A673 (cell line): ENCODE measurements at regions of chr3 and their contacts with region 1.

Region 1: DNA sequence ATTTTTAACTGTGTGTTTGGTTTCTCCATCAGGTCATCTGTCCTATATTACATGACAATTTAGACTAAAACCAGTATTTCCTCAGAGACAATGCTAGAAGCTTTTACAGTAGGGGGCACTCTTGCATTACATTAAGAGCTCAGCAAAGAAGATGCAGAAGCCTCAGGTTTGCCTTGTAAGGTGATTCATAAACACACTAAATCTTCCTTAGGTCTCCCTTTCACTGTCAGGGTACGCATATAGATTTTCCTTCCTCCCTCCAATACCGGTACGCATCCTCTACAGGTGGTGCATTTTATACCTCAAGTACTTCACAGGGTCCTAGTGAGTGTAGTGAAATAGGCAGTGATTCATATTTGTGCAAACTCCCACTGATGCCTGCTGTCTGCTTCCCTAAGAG is 46.5 kb downstream of the CD86 start:
- DNase-seq: peak; percentile 78
- H3K4me3 ChIP-seq: no peak overlapping the region
- H3K27ac ChIP-seq: no peak overlapping the region
- H3K4me1 ChIP-seq: peaks cover 7% of the 10 kb centered on the region
- H3K27me3 ChIP-seq: no peaks in the 10 kb centered on the region
- CTCF ChIP-seq: peak; percentile 71

Region 2: GRCh38 chr3:121545574-121546455 is 555.8 kb before region 1 on chr3 and contains the start of gene POLQ:
- CTCF ChIA-PET with region 1: interaction called, 3 read pairs
- POLR2A ChIA-PET with region 1: no interaction called
- intact Hi-C with region 1: loop called (anchors 5 kb)
- DNase-seq: peak; percentile 97
- H3K4me3 ChIP-seq: peak within 1 kb of the TSS; percentile 92
- H3K27ac ChIP-seq: peak within 1 kb of the TSS; percentile 70
- H3K4me1 ChIP-seq: peaks cover 6% of the 10 kb centered on the region
- H3K27me3 ChIP-seq: no peaks in the 10 kb centered on the region
- CTCF ChIP-seq: no peak
- total RNA-seq, gene POLQ: 20.3 and 22.9 TPM in 2 replicates

Region 3: DNA sequence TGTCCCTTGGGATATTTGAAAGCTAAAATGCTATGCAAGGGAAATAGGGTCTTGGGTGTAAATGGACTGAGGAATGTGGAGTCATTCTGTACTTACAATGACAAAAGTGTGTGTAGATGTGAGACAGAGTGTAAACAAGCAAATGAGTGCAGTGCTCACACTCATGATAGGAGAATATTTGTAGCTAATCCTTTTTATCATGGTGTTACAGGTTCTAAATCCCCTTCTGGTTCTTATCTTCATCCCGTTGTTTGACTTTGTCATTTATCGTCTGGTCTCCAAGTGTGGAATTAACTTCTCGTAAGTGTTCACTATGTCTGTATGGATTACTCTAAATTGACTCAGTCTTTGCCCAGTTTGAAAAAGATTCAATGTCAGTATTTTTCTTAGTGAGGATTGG is 176.9 kb before region 1 on chr3:
- CTCF ChIA-PET with region 1: no interaction called
- POLR2A ChIA-PET with region 1: no interaction called
- intact Hi-C with region 1: no loop called
- DNase-seq: peak; percentile 21
- H3K4me3 ChIP-seq: no peak overlapping the region
- H3K27ac ChIP-seq: no peak overlapping the region
- H3K4me1 ChIP-seq: no peaks in the 10 kb centered on the region
- H3K27me3 ChIP-seq: no peaks in the 10 kb centered on the region
- CTCF ChIP-seq: no peak

Region 4: DNA sequence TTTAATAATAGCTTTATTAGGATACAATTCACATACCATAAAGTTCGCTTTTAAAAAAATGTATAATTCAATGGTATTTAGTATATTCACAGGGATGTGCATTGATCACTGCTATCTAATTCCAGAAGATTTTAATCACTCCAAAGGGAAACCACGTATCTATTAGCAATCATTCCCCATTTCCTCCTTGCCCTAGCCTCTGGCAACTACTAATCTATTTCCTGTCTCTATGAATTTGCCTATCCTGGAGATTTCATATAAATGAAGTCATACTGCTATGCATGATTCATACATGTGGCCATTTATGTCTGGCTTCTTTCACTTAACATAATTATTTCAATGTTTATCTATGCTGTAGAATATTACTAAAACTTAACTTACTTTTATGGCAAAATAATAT is 49.8 kb after region 1 on chr3:
- CTCF ChIA-PET with region 1: no interaction called
- POLR2A ChIA-PET with region 1: no interaction called
- intact Hi-C with region 1: no loop called
- DNase-seq: no peak
- H3K4me3 ChIP-seq: no peak overlapping the region
- H3K27ac ChIP-seq: no peak overlapping the region
- H3K4me1 ChIP-seq: no peaks in the 10 kb centered on the region
- H3K27me3 ChIP-seq: no peaks in the 10 kb centered on the region
- CTCF ChIP-seq: no peak

Region 5: GRCh38 chr3:122258757-122259371 is 157.2 kb after region 1 on chr3:
- CTCF ChIA-PET with region 1: interaction called, 9 read pairs
- POLR2A ChIA-PET with region 1: no interaction called
- intact Hi-C with region 1: loop called (anchors 2 kb)
- DNase-seq: peak; percentile 68
- H3K4me3 ChIP-seq: no peak overlapping the region
- H3K27ac ChIP-seq: no peak overlapping the region
- H3K4me1 ChIP-seq: no peaks in the 10 kb centered on the region
- H3K27me3 ChIP-seq: peaks cover 39% of the 10 kb centered on the region
- CTCF ChIP-seq: peak; percentile 67

Region 6: GRCh38 chr3:122299872-122300460 is 198.3 kb after region 1 on chr3:
- CTCF ChIA-PET with region 1: no interaction called
- POLR2A ChIA-PET with region 1: no interaction called
- intact Hi-C with region 1: loop called (anchors 2 kb)
- DNase-seq: peak; percentile 45
- H3K4me3 ChIP-seq: no peak overlapping the region
- H3K27ac ChIP-seq: no peak overlapping the region
- H3K4me1 ChIP-seq: no peaks in the 10 kb centered on the region
- H3K27me3 ChIP-seq: no peaks in the 10 kb centered on the region
- CTCF ChIP-seq: peak; percentile 61

Region 7: DNA sequence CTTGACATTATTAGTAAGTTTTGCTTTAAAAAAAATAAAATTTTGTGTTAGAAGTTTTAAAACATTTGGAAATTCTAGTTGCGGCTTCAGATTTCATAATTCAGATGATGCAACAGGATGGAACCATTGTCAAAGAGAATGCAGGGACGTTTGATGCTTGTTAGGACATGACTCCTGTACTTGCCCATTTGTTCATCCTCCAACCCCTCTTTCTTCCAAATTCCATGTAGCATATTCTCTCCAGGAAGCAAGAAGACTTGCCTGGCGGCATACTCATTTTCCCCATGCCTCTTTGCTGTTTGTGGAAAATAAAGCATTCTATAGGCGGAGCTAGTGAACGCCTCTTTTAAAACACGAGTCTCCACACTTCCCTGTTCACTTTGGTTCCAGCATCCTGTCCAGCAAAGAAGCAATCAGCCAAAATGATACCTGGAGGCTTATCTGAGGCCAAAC is 223.3 kb after region 1 on chr3 and contains the start of gene CSTA:
- CTCF ChIA-PET with region 1: interaction called, 14 read pairs
- POLR2A ChIA-PET with region 1: no interaction called
- intact Hi-C with region 1: no loop called
- DNase-seq: peak; percentile 8
- H3K4me3 ChIP-seq: no peak within 1 kb of the TSS
- H3K27ac ChIP-seq: no peak within 1 kb of the TSS
- H3K4me1 ChIP-seq: no peaks in the 10 kb centered on the region
- H3K27me3 ChIP-seq: no peaks in the 10 kb centered on the region
- CTCF ChIP-seq: no peak
- total RNA-seq, gene CSTA: 3.8 and 6.5 TPM in 2 replicates

Region 8: GRCh38 chr3:122356415-122356814 is 254.8 kb after region 1 on chr3:
- CTCF ChIA-PET with region 1: interaction called, 6 read pairs
- POLR2A ChIA-PET with region 1: no interaction called
- intact Hi-C with region 1: loop called (anchors 5 kb)
- DNase-seq: peak; percentile 46
- H3K4me3 ChIP-seq: no peak overlapping the region
- H3K27ac ChIP-seq: no peak overlapping the region
- H3K4me1 ChIP-seq: peaks cover 23% of the 10 kb centered on the region
- H3K27me3 ChIP-seq: no peaks in the 10 kb centered on the region
- CTCF ChIP-seq: peak; percentile 60

Region 9: GRCh38 chr3:122679085-122679881 is 577.6 kb after region 1 on chr3:
- CTCF ChIA-PET with region 1: interaction called, 3 read pairs
- POLR2A ChIA-PET with region 1: no interaction called
- intact Hi-C with region 1: loop called (anchors 2 kb)
- DNase-seq: peak; percentile 89
- H3K4me3 ChIP-seq: peak overlapping the region; percentile 71
- H3K27ac ChIP-seq: no peak overlapping the region
- H3K4me1 ChIP-seq: peaks cover 12% of the 10 kb centered on the region
- H3K27me3 ChIP-seq: no peaks in the 10 kb centered on the region
- CTCF ChIP-seq: peak; percentile 82